A673 (cell line): ENCODE measurements at regions of chr5 and their contacts with region 1.

Region 1: GRCh38 chr5:108836492-108836891 is 88.8 kb downstream of the FER start:
- DNase-seq: no peak
- H3K4me3 ChIP-seq: no peak overlapping the region
- H3K27ac ChIP-seq: no peak overlapping the region
- H3K4me1 ChIP-seq: no peaks in the 10 kb centered on the region
- H3K27me3 ChIP-seq: no peaks in the 10 kb centered on the region
- CTCF ChIP-seq: no peak

Region 2: DNA sequence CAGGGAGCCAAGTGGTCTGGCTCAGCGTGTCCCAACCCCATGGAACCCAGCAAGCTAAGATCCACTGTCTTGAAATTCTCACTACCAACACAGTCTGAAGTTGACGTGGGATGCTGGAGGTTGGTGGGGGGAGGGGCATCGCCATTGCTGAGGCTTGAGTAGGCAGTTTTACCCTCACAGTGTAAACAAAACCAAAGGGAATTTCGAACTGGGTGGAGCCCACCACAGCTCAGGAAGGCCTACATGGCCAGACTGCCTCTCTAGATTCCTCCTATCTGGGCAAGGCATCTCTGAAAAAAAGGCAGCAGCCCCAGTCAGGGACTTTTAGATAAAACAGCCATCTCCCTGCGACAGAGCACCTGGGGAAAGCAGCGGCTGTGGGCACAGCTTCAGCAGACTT is 437.5 kb before region 1 on chr5:
- CTCF ChIA-PET with region 1: no interaction called
- POLR2A ChIA-PET with region 1: no interaction called
- intact Hi-C with region 1: no loop called
- DNase-seq: no peak
- H3K4me3 ChIP-seq: no peak overlapping the region
- H3K27ac ChIP-seq: no peak overlapping the region
- H3K4me1 ChIP-seq: no peaks in the 10 kb centered on the region
- H3K27me3 ChIP-seq: no peaks in the 10 kb centered on the region
- CTCF ChIP-seq: no peak

Region 3: GRCh38 chr5:108736855-108737254 is 99.6 kb before region 1 on chr5:
- CTCF ChIA-PET with region 1: no interaction called
- POLR2A ChIA-PET with region 1: interaction called, 10 read pairs
- intact Hi-C with region 1: no loop called
- DNase-seq: no peak
- H3K4me3 ChIP-seq: no peak overlapping the region
- H3K27ac ChIP-seq: no peak overlapping the region
- H3K4me1 ChIP-seq: no peaks in the 10 kb centered on the region
- H3K27me3 ChIP-seq: no peaks in the 10 kb centered on the region
- CTCF ChIP-seq: no peak

Region 4: GRCh38 chr5:108876451-108876850 is 40.0 kb after region 1 on chr5:
- CTCF ChIA-PET with region 1: no interaction called
- POLR2A ChIA-PET with region 1: no interaction called
- intact Hi-C with region 1: no loop called
- DNase-seq: no peak
- H3K4me3 ChIP-seq: no peak overlapping the region
- H3K27ac ChIP-seq: no peak overlapping the region
- H3K4me1 ChIP-seq: peaks cover 7% of the 10 kb centered on the region
- H3K27me3 ChIP-seq: no peaks in the 10 kb centered on the region
- CTCF ChIP-seq: no peak

Region 5: GRCh38 chr5:108919591-108920326 is 83.3 kb after region 1 on chr5:
- CTCF ChIA-PET with region 1: no interaction called
- POLR2A ChIA-PET with region 1: no interaction called
- intact Hi-C with region 1: no loop called
- DNase-seq: peak; percentile 20
- H3K4me3 ChIP-seq: no peak overlapping the region
- H3K27ac ChIP-seq: no peak overlapping the region
- H3K4me1 ChIP-seq: peaks cover 9% of the 10 kb centered on the region
- H3K27me3 ChIP-seq: no peaks in the 10 kb centered on the region
- CTCF ChIP-seq: peak; percentile 57